ENCODE measurements at regions of chr21 and their contacts with region 1.

Region 1: GRCh38 chr21:36927719-36928117 is 38.8 kb downstream of the HLCS start:
- DNase-seq: peak; percentile 73 to 82
- ATAC-seq: peak; percentile 62 to 93 (median 80)
- H3K4me3 ChIP-seq: no peak overlapping the region
- H3K27ac ChIP-seq: no peak overlapping the region
- H3K4me1 ChIP-seq: peaks cover 0 to 7% (median 3%) of the 10 kb centered on the region in 9 donors
- H3K27me3 ChIP-seq: no peaks in the 10 kb centered on the region
- CTCF ChIP-seq: peak; percentile 85 to 97 (median 93)

Region 2: GRCh38 chr21:36419996-36420395 is 507.7 kb before region 1 on chr21:
- intact Hi-C with region 1: loop called in 7 of 10 experiments (anchors 5 to 10 kb)
- DNase-seq: peak; percentile 74 to 85
- ATAC-seq: peak; percentile 86 to 96 (median 92)
- H3K4me3 ChIP-seq: no peak overlapping the region
- H3K27ac ChIP-seq: no peak overlapping the region
- H3K4me1 ChIP-seq: peaks cover 0 to 17% (median 13%) of the 10 kb centered on the region in 9 donors
- H3K27me3 ChIP-seq: no peaks in the 10 kb centered on the region
- CTCF ChIP-seq: peak; percentile 68 to 88 (median 80)

Region 3: DNA sequence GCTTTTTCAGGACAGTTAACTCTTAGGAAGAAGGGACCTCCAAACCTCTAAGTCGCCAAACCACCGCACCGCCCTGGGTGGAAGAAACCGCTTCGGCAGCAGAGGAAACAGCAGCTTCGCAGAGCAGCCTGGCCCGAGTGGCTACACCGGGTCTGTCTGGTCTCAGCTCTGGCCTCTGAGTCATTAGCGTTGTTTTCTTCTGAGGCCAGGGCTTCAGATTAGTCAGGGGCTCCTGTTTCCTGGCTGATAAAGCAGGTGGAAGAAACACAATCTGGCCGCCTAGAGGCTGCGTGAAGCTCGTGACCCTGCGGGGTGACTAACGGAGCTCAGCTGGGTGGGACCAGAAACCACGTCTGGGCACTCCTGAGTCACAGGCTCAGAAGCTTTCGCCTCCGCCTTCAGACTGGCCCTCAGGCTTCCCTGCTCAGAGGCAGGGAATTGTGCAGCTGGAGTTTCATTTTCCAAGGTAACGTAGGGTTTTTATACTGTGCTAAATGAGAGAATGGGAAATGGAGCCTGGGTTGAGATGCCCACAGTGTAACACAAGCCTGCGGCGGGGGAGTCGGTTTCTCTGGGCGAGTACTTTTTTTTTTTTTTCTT is 497.7 kb before region 1 on chr21:
- intact Hi-C with region 1: loop called in 4 of 10 experiments (anchors 10 kb)
- DNase-seq: peak; percentile 64 to 72
- ATAC-seq: peak; percentile 85 to 95 (median 94)
- H3K4me3 ChIP-seq: peak overlapping the region in 9 of 10 donors; percentile 6 to 48 (median 40)
- H3K27ac ChIP-seq: peak overlapping the region; percentile 14 to 87 (median 76)
- H3K4me1 ChIP-seq: peaks cover 0 to 32% (median 9%) of the 10 kb centered on the region in 9 donors
- H3K27me3 ChIP-seq: peaks cover 0 to 28% (median 0%) of the 10 kb centered on the region in 7 donors
- CTCF ChIP-seq: peak in 1 of 9 donors; percentile 5

Region 4: DNA sequence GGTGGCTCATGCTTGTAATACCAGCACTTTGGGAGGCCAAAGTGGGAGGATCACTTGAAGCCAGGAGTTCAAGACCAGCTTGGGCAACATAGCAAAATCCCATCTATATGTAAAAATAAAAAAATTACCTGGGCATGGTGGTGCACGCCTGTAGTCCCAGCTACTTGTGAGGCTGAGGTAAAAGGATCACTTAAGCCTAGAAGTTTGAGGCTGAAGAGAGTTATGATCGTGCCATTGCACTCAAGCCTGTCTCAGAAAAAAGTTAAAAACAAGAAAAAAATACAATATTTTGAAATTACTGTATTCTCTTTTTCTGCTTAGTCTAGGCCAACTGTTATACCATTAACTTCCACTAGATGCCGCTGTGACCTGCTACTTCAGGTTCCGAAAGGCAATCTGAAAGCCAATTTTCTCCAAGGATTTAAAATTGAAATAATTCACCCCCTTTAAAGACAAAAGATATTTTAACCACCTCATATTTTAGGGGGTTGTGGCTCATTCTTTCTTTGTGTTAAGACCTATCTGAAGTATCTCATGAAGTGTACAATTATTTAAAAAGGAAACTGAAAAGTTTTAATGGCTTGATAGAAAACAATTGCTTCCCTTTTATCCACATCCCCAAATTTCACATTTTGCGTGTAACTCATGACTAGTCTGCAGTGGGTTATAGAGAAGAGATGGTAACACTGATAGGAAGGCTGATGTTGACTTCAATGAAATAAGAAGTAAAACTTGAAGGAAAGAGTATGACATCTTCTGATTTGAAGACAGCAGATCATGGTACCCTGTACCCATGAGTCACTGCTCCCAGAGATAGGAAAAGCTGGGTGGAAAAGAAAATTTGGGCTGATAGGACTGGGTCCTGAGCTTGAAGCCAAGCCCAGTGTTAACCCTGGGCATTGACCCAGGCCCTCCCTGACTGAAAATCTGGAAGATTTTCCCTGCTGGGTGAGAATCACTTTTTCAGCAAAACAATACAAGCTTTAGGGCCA is 423.4 kb before region 1 on chr21:
- intact Hi-C with region 1: loop called (anchors 1 to 5 kb)
- DNase-seq: peak in 1 of 2 donors; percentile 28
- ATAC-seq: no peak
- H3K4me3 ChIP-seq: no peak overlapping the region
- H3K27ac ChIP-seq: no peak overlapping the region
- H3K4me1 ChIP-seq: no peaks in the 10 kb centered on the region
- H3K27me3 ChIP-seq: peaks cover 0 to 35% (median 6%) of the 10 kb centered on the region in 7 donors
- CTCF ChIP-seq: peak in 8 of 9 donors; percentile 85 to 96 (median 94)

Region 5: DNA sequence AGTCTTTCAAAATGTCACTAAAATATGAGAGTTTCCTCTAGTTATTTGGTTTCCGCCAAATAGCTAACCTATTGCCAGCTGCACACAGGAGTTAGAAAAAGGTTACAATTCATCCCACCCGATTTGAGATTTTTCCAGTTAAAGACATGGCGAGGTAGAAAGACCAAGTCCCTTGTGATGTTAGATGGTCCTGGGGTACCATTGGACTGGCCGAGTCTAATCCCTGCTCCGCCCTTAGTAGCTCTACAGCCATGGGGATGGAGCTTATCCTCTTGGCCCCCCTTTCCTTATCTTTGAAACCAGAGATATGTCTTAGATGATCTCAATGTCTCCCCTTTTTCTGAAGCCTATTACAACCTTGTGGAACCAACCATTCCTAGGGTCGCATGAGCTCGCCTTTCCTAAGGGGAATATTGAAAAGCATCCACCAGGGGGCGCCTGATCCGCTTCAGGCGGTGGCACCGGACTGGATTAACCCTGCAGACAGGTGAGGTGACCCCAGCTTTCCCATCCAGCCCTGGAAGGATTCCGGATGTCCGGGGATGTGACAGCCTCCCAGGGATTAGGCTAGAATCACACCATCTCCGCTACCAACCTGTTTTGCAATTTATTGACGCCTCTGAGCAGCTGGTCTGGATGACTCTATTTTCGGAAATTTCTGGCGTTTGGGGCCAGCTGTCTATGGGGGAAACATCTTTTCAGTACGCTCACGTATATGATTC is 297.1 kb before region 1 on chr21:
- intact Hi-C with region 1: loop called (anchors 2 to 10 kb)
- DNase-seq: peak; percentile 39 to 41
- ATAC-seq: peak in 3 of 8 donors; percentile 33 to 41 (median 37)
- H3K4me3 ChIP-seq: no peak overlapping the region
- H3K27ac ChIP-seq: no peak overlapping the region
- H3K4me1 ChIP-seq: no peaks in the 10 kb centered on the region
- H3K27me3 ChIP-seq: peaks cover 0 to 57% (median 34%) of the 10 kb centered on the region in 7 donors
- CTCF ChIP-seq: peak; percentile 51 to 82 (median 70)

Region 6: DNA sequence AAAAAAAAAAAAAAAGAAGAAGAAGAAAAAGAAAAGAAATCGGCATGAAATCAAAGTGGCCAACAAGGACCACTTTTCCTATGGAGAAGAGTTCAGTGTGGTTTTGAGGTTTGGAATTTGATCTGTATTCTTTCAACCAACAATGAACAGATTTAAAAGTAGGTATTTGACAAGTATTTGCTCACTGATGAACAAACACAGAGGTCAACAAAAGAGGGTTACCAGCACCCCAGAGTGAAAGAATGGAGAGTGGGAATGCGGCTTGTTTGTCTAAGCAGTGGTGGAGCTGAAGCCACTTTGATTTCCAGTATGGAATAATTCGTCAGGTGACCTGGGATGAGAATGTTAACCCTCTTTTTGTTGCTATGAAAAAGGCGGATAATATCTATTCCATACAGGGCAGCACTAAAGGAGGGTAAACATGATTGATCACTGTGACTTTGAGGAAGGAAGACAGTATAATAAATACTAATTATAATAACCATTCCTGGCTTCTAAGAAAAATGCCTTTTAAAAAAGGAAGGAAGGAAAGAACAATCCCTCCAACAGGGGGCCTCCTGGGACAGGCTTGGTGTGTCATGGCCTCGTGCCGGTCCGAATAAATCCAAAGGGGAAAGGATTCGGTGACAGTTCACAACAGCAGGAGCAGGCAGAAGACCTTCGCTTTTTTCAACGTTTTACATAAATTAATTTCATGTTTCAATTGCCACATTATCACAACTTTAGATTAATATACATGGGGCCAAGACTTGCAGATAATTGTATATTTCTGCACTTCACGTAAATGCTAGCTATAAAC is 266.0 kb before region 1 on chr21:
- intact Hi-C with region 1: loop called in 1 of 10 experiments (anchors 5 kb)
- DNase-seq: peak in 1 of 2 donors; percentile 36
- ATAC-seq: peak in 2 of 8 donors; percentile 47 to 63
- H3K4me3 ChIP-seq: no peak overlapping the region
- H3K27ac ChIP-seq: no peak overlapping the region
- H3K4me1 ChIP-seq: peaks cover 0 to 4% (median 0%) of the 10 kb centered on the region in 9 donors
- H3K27me3 ChIP-seq: peaks cover 0 to 71% (median 50%) of the 10 kb centered on the region in 7 donors
- CTCF ChIP-seq: peak in 7 of 9 donors; percentile 38 to 63 (median 52)

Region 7: GRCh38 chr21:36747815-36748383 is 179.8 kb before region 1 on chr21:
- intact Hi-C with region 1: loop called in 6 of 10 experiments (anchors 5 to 10 kb)
- DNase-seq: peak; percentile 38 to 60
- ATAC-seq: peak; percentile 42 to 85 (median 66)
- H3K4me3 ChIP-seq: peak overlapping the region; percentile 34 to 60 (median 53)
- H3K27ac ChIP-seq: peak overlapping the region in 1 of 10 donors; percentile 39
- H3K4me1 ChIP-seq: peaks cover 0 to 28% (median 9%) of the 10 kb centered on the region in 9 donors
- H3K27me3 ChIP-seq: peaks cover 0 to 51% (median 13%) of the 10 kb centered on the region in 7 donors
- CTCF ChIP-seq: peak in 5 of 9 donors; percentile 6 to 38 (median 35)

Region 8: DNA sequence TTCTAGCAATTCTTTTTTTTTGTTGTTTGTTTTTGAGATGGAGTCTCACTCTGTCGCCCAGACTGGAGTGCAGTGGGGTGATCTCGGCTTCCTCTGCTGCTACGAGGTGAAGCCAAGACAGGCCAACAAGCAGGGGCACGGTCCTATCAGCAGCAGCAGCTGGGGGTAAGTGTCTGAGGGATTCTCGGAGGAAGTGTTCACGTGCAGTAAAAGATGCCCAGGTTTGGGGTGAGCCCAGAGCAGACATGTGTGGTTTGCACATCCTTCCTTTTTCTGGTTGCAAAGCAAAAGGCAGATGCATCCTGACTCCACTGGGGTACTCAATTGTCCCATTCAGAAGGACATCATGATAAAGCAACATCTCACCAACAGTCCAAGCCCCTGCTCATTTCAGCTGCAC is 117.4 kb after region 1 on chr21:
- intact Hi-C with region 1: no loop called
- DNase-seq: no peak
- ATAC-seq: no peak
- H3K4me3 ChIP-seq: no peak overlapping the region
- H3K27ac ChIP-seq: no peak overlapping the region
- H3K4me1 ChIP-seq: no peaks in the 10 kb centered on the region
- H3K27me3 ChIP-seq: peaks cover 0 to 2% (median 0%) of the 10 kb centered on the region in 7 donors
- CTCF ChIP-seq: no peak